A549 (cell line): ENCODE measurements at regions of chr11 and their contacts with region 1.

Region 1: DNA sequence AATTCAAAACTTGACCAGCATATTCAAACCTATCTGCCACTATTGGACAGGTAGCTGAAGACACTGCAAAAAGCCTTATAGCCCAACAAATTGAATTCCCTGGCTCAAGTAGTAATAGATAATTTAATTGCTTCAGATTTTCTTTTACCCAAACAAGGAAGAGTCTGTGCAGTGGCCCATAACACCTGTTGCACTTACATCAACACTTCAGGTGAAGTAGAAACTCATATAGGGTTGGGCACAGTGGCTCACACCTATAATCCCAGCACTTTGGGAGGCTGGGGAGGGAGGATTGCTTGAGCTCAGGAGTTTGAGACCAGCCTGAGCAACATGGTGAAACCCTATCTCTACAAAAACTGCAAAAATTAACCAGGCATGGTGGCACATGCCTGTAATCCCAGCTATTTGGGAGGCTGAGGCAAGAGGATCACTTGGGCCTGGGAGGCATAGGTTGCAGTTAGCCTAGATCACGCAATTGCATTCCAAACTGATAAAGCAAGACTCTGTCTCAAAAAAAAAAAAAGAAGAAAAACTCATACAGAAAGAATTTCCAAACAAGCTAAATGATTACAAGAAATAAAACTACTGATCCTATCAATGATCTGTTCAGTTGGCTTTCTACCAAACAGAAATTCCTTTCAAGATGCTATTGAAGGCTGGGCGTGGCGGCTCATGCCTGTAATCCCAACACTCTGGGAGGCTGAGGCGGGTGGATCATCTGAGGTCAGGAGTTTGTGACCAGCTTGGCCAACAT is 9.5 kb downstream of the FOLR3 start:
- DNase-seq: peak in 1 of 2 experiments; percentile 48
- ATAC-seq: 0 out of 6 replicates have a peak, but pooled peaks of 1 of the 2 experiments have one; percentile 22
- H3K4me3 ChIP-seq: no peak overlapping the region
- H3K27ac ChIP-seq: peak overlapping the region in 1 of 2 experiments; percentile 37; a peak in 2 of 6 replicates
- H3K4me1 ChIP-seq: peaks cover 17% of the 10 kb centered on the region; the same call in 2 of the 3 replicates
- CTCF ChIP-seq: no peak
- EP300 ChIP-seq: 0 out of 5 replicates have a peak, but pooled peaks of 1 of the 2 experiments have one; percentile 24
- POLR2A ChIP-seq: no peak
- RAD21 ChIP-seq: no peak

Region 2: GRCh38 chr11:72015511-72016171 is 129.3 kb before region 1 on chr11:
- CTCF ChIA-PET with region 1: interaction called, 12 read pairs
- POLR2A ChIA-PET with region 1: no interaction called
- DNase-seq: peak in 1 of 2 experiments; percentile 49
- ATAC-seq: peak; percentile 48 to 64; a peak in 4 of 6 replicates
- H3K4me3 ChIP-seq: no peak overlapping the region
- H3K27ac ChIP-seq: peak overlapping the region in 1 of 2 experiments; percentile 15; a peak in 1 of 6 replicates
- H3K4me1 ChIP-seq: peaks cover 30% of the 10 kb centered on the region
- CTCF ChIP-seq: peak; percentile 42; the same call in 2 of the 3 replicates
- EP300 ChIP-seq: no peak
- POLR2A ChIP-seq: no peak
- RAD21 ChIP-seq: peak; percentile 32 to 54; a peak in 4 of 5 replicates

Region 3: DNA sequence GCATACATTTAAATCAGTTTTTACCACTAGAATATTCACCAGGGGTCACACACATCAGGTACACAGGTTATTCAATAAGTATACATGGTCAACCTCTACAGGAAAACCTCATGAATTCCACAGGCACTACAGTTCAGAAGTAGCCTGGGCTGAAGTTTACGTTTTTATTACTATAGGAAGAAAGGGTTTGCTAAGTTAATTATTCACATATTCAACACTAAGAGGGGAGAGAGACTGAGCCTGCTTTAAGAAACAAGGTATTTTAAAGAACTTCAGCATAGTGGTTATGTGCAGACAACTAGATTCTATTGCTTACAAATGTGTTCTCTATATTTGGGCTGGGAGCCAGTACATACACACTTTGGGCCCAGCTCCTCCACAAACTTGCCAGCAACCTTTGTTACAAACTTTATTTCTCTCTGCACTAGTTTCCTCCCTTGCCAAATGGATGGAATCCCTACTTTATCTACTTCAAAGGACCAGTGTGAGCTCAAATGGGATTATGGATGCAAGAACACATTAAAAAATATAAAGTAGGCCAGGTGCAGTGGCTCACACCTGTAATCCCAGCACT is 114.4 kb before region 1 on chr11:
- CTCF ChIA-PET with region 1: interaction called, 37 read pairs
- POLR2A ChIA-PET with region 1: no interaction called
- DNase-seq: no peak
- ATAC-seq: no peak
- H3K4me3 ChIP-seq: no peak overlapping the region
- H3K27ac ChIP-seq: no peak overlapping the region
- H3K4me1 ChIP-seq: peaks cover 8% of the 10 kb centered on the region
- CTCF ChIP-seq: no peak
- EP300 ChIP-seq: no peak
- POLR2A ChIP-seq: no peak
- RAD21 ChIP-seq: no peak

Region 4: DNA sequence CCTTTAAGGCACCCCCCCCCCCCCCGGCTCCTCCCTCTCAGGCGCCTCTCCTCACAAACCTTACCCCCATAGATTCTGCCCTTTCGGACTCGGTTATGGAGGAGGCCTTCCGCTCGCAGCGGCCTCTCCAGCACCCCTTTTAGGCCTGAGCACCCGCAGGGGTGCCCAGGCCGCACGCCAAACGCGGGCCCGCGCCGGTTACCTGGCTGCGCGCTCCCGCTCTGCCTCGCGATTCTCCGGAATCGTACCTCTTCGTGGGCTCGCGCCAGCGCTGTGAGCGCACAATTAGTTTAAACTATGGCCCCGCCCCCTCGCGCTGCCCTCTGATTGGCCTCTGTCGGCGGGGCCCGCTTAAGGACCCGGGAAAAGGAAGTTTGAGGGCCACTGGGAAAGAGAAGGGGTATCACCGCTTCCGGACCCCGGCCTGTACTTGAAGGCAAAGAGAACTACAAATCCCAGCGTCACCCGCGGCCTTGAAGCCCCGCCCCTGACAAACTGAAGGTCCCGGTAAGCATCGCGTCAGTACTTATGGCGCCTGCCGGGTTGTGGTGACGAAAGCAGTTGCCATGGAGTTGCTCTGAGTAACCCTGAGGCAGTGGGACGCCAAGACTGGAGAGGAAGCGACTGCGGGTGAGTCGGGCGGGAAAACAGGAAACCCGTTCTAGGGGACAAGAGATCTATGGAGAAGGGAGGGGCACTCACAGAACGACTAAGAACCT is 64.6 kb before region 1 on chr11 and contains the starts of genes LRRC51 and NUMA1:
- CTCF ChIA-PET with region 1: interaction called, 10 read pairs
- POLR2A ChIA-PET with region 1: no interaction called
- DNase-seq: peak; percentile 91 to 100
- ATAC-seq: peak; percentile 96 to 97
- H3K4me3 ChIP-seq: peak within 1 kb of the TSS; percentile 85
- H3K27ac ChIP-seq: peak within 1 kb of the TSS; percentile 90
- H3K4me1 ChIP-seq: peaks cover 19% of the 10 kb centered on the region
- CTCF ChIP-seq: no peak
- EP300 ChIP-seq: no peak
- POLR2A ChIP-seq: peak; percentile 54
- RAD21 ChIP-seq: no peak
- polyA plus RNA-seq, gene LRRC51: 14.3 and 16.3 TPM in 2 replicates
- polyA plus RNA-seq, gene NUMA1: 51.5 and 64.6 TPM in 2 replicates

Region 5: GRCh38 chr11:72102946-72103753 is 41.8 kb before region 1 on chr11 and contains the start of gene LAMTOR1:
- CTCF ChIA-PET with region 1: interaction called, 23 read pairs
- POLR2A ChIA-PET with region 1: interaction called, 3 read pairs
- DNase-seq: peak; percentile 90 to 99
- ATAC-seq: peak; percentile 87 to 96
- H3K4me3 ChIP-seq: peak within 1 kb of the TSS; percentile 94
- H3K27ac ChIP-seq: peak within 1 kb of the TSS; percentile 93 to 94
- H3K4me1 ChIP-seq: peaks cover 14% of the 10 kb centered on the region
- CTCF ChIP-seq: no peak
- EP300 ChIP-seq: 0 out of 5 replicates have a peak, but pooled peaks of 1 of the 2 experiments have one; percentile 26
- POLR2A ChIP-seq: peak; percentile 49
- RAD21 ChIP-seq: no peak
- polyA plus RNA-seq, gene LAMTOR1: 66.1 and 85.8 TPM in 2 replicates

Region 6: DNA sequence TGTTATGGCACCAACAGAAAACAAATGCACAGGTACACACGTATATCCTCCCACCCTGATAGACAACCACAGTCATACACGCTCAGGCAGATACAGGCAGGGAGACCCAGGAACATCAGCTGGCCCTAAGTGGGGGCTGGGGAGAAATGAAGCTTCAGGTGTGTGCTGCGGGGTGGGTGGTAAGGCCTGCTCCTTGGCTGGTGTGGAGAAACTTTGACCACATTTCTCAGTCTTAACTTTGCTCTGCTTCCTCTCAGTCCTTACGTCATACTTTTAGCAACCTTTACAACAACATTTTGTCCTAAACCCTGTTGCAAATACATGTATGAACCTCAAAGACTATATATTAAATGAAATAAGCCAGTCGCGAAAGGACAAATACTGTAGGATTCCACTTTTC is 25.8 kb before region 1 on chr11:
- CTCF ChIA-PET with region 1: interaction called, 27 read pairs
- POLR2A ChIA-PET with region 1: no interaction called
- DNase-seq: no peak
- ATAC-seq: no peak
- H3K4me3 ChIP-seq: no peak overlapping the region
- H3K27ac ChIP-seq: no peak overlapping the region
- H3K4me1 ChIP-seq: no peaks in the 10 kb centered on the region
- CTCF ChIP-seq: no peak
- EP300 ChIP-seq: no peak
- POLR2A ChIP-seq: no peak
- RAD21 ChIP-seq: no peak

Region 7: DNA sequence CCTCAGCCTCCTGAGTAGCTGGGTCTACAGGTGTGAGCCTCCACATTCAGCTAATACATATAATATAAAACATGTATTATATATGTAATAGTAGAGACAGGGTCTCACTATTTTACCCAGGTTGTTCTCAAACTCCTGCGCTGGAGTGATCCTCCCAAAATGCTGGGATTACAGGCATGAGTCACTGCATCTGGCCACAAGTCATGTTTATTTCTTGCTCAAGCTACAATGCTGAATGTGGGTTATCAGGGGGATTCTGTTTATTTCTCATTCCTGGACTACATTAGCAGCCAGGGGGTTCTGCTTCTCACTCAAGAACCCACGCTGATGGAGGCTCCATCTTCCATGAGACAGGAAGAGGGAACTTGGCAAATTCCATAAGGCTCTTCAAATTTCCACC is 15.3 kb after region 1 on chr11:
- CTCF ChIA-PET with region 1: interaction called, 40 read pairs
- POLR2A ChIA-PET with region 1: no interaction called
- DNase-seq: no peak
- ATAC-seq: no peak
- H3K4me3 ChIP-seq: no peak overlapping the region
- H3K27ac ChIP-seq: no peak overlapping the region
- H3K4me1 ChIP-seq: peaks cover 9% of the 10 kb centered on the region
- CTCF ChIP-seq: no peak
- EP300 ChIP-seq: no peak
- POLR2A ChIP-seq: no peak
- RAD21 ChIP-seq: no peak

Region 8: DNA sequence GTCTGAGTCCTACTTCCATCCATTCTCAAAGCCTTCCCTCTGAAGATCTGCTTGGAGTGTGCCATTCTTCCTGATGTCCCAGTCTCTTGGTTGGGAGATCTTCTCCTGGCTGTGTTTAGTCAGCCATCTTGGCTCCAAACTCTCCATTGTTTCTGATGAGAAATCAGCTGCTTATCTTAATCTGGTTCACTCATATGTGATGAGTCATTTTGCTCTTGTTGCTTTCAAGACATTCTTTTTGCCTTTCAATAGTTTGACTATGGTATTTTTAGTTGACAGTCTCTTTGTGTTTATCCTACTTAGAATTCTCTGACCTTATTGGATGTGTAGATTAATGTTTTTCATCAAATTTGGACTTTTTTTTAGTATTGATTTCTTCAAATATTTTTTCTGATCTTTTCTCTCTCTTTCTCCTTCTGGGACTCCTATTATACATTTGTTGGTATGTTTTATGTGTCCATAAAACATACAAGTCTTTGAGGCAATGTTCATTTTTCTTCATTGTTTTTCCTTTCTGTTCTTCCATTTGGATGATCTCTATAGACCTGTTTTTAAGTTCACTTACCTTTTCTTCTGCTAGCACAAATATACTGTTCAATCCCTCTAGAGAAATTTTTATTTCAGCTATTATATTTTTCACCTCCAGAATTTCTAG is 366.5 kb after region 1 on chr11:
- CTCF ChIA-PET with region 1: no interaction called
- POLR2A ChIA-PET with region 1: no interaction called
- DNase-seq: peak in 1 of 2 experiments; percentile 14
- ATAC-seq: no peak
- H3K4me3 ChIP-seq: no peak overlapping the region
- H3K27ac ChIP-seq: no peak overlapping the region
- H3K4me1 ChIP-seq: no peaks in the 10 kb centered on the region
- CTCF ChIP-seq: no peak
- EP300 ChIP-seq: no peak
- POLR2A ChIP-seq: no peak
- RAD21 ChIP-seq: no peak